Ascending aorta (tissue), 2 donors: ENCODE measurements at regions of chrX and their contacts with region 1.

Region 1: DNA sequence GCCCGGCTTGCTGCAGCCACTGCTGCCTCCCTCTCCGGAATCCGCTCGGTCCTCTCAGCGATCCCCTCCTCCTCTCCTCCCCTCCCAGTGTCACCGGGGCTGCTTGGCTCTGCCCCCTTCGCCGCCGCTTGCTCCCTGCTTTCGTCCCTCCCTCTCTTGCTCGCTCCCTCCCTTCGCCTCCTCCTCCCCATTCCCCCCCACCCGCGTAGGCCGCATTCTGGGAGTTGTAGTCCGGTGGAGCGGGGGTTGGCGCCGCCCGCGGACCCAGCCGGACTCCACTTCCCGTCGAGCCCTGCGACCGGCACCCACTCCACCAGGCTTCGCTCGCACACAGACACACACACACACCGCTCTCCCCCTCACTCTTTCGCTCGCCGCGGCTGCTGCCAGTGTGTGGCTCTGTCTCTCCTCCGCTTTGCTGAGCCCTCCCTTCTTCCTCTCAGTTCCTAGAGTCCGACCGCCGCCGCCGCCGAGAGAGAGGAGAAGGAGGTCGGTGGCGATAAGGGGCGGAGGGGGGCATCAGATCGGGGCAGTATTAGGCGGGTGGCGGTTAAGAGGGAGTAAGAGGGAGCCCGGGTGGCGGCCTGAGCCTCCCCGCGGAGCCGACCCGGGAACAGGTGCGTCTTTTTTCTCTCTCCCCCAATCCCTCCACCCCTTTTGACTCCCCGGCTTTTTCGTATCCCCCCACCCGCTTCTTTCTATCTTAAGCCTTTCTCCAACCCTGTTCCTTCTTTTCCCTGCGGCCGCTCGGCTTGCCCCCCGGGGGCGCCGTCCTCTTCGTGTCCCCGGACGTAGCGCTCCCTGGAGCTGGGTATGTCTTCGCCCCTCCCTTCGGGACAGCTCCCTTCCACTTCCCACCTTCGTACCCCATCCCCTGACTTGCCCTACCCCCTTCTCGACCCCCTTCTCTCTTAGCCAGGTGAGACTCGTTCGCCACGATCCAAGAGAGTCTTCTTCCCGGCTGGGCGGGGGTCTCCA is at the start of gene BCORL1:
- DNase-seq: peak; percentile 75 to 94
- H3K4me3 ChIP-seq: peak within 1 kb of the TSS in 1 of 2 donors; percentile 58
- H3K27ac ChIP-seq: no peak within 1 kb of the TSS
- H3K4me1 ChIP-seq: no peaks in the 10 kb centered on the region
- H3K27me3 ChIP-seq: no peaks in the 10 kb centered on the region
- CTCF ChIP-seq: no peak
- total RNA-seq, gene BCORL1: 10.3 TPM

Region 2: GRCh38 chrX:129600981-129601424 is 381.6 kb before region 1 on chrX:
- intact Hi-C with region 1: no loop called
- DNase-seq: no peak
- H3K4me3 ChIP-seq: no peak overlapping the region
- H3K27ac ChIP-seq: peak overlapping the region; percentile 57 to 72
- H3K4me1 ChIP-seq: no peaks in the 10 kb centered on the region
- H3K27me3 ChIP-seq: no peaks in the 10 kb centered on the region
- CTCF ChIP-seq: peak; percentile 26 to 62 (median 62)

Region 3: GRCh38 chrX:129953881-129954280 is 28.7 kb before region 1 on chrX:
- intact Hi-C with region 1: loop called (anchors 2 kb)
- DNase-seq: no peak
- H3K4me3 ChIP-seq: no peak overlapping the region
- H3K27ac ChIP-seq: no peak overlapping the region
- H3K4me1 ChIP-seq: no peaks in the 10 kb centered on the region
- H3K27me3 ChIP-seq: no peaks in the 10 kb centered on the region
- CTCF ChIP-seq: no peak

Region 4: GRCh38 chrX:130024127-130024526 is 41.6 kb after region 1 on chrX:
- intact Hi-C with region 1: loop called (anchors 2 kb)
- DNase-seq: peak; percentile 57 to 87
- H3K4me3 ChIP-seq: no peak overlapping the region
- H3K27ac ChIP-seq: no peak overlapping the region
- H3K4me1 ChIP-seq: no peaks in the 10 kb centered on the region
- H3K27me3 ChIP-seq: no peaks in the 10 kb centered on the region
- CTCF ChIP-seq: no peak